RWPE1 (cell line): ENCODE measurements at regions of chr10 and their contacts with region 1.

Region 1: GRCh38 chr10:97792141-97792721 is 20.4 kb upstream of the SFRP5 start:
- DNase-seq: peak; percentile 81
- H3K27ac ChIP-seq: no peak overlapping the region
- CTCF ChIP-seq: peak; percentile 93

Region 2: GRCh38 chr10:96642973-96643372 is 1149.3 kb before region 1 on chr10:
- CTCF ChIA-PET with region 1: no interaction called
- POLR2A ChIA-PET with region 1: no interaction called
- DNase-seq: no peak
- H3K27ac ChIP-seq: no peak overlapping the region
- CTCF ChIP-seq: no peak

Region 3: DNA sequence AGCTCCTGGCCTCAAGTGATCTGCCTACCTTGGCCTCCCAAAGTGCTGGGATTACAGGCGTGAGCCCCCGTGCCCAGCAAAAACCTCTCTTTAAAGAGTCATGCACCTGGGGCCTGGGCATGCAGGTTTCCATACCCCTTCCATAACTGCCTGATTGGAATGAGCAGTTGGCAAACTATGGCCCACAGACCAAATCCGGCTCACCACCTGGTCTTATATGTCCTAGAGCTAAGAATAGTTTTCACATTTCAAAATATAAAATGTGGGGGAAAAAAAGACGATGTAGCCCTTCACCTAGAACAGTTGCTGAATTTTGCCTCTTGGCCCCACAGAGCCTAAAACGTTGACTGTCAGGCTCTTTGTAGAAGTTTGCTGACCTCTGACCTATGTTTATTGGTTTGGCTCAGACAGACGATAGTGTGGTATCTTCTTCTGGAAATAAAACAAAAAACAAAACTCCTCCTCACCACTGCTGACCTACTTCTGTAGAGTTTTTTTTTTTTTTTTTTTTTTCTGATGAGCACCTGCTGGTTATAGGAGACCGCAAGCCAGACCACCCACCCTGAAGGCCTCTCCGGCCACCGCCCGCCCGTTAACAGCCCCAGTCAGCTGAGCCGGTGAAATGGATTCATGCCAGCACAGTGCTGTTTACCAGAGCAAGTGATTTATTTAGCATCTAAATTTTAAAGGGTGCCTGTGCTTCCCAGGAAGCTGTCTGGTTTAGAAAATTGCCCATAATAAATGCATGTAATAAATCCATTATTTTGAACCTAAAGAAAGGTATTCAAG is 13.1 kb after region 1 on chr10:
- CTCF ChIA-PET with region 1: interaction called, 23 read pairs
- POLR2A ChIA-PET with region 1: no interaction called
- DNase-seq: no peak
- H3K27ac ChIP-seq: no peak overlapping the region
- CTCF ChIP-seq: no peak

Region 4: GRCh38 chr10:97861097-97861750 is 69.0 kb after region 1 on chr10:
- CTCF ChIA-PET with region 1: interaction called, 18 read pairs
- POLR2A ChIA-PET with region 1: no interaction called
- DNase-seq: peak; percentile 88
- H3K27ac ChIP-seq: no peak overlapping the region
- CTCF ChIP-seq: no peak

Region 5: GRCh38 chr10:97869091-97870042 is 77.1 kb after region 1 on chr10:
- CTCF ChIA-PET with region 1: interaction called, 115 read pairs
- POLR2A ChIA-PET with region 1: no interaction called
- DNase-seq: peak; percentile 95
- H3K27ac ChIP-seq: peak overlapping the region; percentile 61
- CTCF ChIP-seq: peak; percentile 79

Region 6: DNA sequence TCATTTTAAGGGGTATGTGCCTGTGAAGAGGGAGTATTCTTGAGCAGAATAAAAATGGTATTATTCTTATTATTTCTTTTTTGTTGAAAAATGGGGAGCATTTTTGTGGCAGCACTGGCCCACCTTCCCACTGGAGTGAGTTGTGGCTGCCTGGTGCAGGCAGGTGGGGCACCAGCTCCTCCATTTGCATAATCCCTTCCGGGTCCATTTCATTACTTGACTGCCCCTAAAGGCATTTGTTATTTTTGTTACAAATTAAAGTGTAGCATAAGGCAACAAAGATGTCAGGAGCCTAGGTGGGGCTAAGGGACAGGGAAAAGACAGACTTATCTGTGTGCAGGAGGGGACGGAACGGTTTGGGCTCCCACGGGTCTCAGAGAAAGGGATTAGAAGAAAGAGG is 84.2 kb after region 1 on chr10:
- CTCF ChIA-PET with region 1: interaction called, 115 read pairs
- POLR2A ChIA-PET with region 1: no interaction called
- DNase-seq: no peak
- H3K27ac ChIP-seq: no peak overlapping the region
- CTCF ChIP-seq: no peak

Region 7: GRCh38 chr10:98045785-98046389 is 253.7 kb after region 1 on chr10:
- CTCF ChIA-PET with region 1: interaction called, 16 read pairs
- POLR2A ChIA-PET with region 1: no interaction called
- DNase-seq: peak; percentile 73
- H3K27ac ChIP-seq: no peak overlapping the region
- CTCF ChIP-seq: peak; percentile 90